ENCODE measurements at regions of chr12 and their contacts with region 1.

Region 1: GRCh38 chr12:103647267-103647666 is 60.2 kb downstream of the STAB2 start:
- DNase-seq: no peak
- H3K4me3 ChIP-seq: no peak overlapping the region
- H3K27ac ChIP-seq: no peak overlapping the region
- H3K4me1 ChIP-seq: no peaks in the 10 kb centered on the region
- H3K27me3 ChIP-seq: peaks cover 14% of the 10 kb centered on the region
- CTCF ChIP-seq: no peak

Region 2: DNA sequence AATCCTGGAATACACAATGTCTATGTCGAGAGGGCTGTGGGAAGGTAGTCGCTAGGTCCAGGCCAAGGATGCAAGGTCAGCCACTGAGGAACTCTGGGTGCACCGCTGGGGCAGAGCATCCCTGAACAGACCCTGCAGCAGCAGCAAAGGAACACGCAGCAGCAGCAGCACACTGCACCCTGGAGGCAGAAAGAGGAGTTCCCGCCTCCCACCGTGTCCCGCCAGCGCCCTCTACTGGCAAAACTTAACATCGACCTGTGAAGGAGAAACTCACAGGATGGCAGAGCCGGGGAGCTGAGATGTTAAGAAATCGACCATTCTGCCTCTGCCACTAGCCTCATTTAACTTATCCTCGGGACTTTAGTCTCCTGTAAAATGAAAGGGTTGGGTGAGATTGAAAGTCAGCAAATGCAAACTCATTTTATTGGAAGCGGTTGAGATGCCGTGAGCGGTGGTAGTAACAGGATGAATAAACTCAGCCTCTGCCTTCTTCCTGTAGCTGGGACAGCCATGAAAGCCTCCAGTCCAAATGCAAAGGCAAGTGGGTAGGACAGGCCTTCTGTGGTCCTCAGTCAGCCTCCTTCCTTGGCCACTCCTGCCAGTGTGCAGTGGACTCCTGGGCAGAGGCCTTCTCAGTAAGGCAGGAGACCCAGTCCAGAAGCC is 14.6 kb before region 1 on chr12:
- CTCF ChIA-PET with region 1: interaction called, 11 read pairs
- POLR2A ChIA-PET with region 1: no interaction called
- intact Hi-C with region 1: no loop called
- DNase-seq: peak; percentile 86
- H3K4me3 ChIP-seq: no peak overlapping the region
- H3K27ac ChIP-seq: no peak overlapping the region
- H3K4me1 ChIP-seq: no peaks in the 10 kb centered on the region
- H3K27me3 ChIP-seq: peaks cover 26% of the 10 kb centered on the region
- CTCF ChIP-seq: peak; percentile 100

Measured in A673 (cell line).